GM12878 (cell line): ENCODE measurements at regions of chr14 and their contacts with region 1.

Region 1: GRCh38 chr14:65958664-65959562 is 527.3 kb upstream of the CCDC196 start:
- DNase-seq: no peak
- ATAC-seq: peak; percentile 82
- H3K4me3 ChIP-seq: no peak overlapping the region
- H3K27ac ChIP-seq: no peak overlapping the region
- H3K4me1 ChIP-seq: no peaks in the 10 kb centered on the region
- H3K27me3 ChIP-seq: peaks cover 2 to 4% of the 10 kb centered on the region in 2 experiments; a peak in 2 of 4 replicates
- CTCF ChIP-seq: peak; percentile 22 to 55 (median 42); a peak in 4 of 6 replicates
- EP300 ChIP-seq: no peak
- POLR2A ChIP-seq: no peak
- RAD21 ChIP-seq: peak; percentile 57

Region 2: GRCh38 chr14:65940056-65940733 is 18.7 kb before region 1 on chr14:
- CTCF ChIA-PET with region 1: interaction called, 15 read pairs
- POLR2A ChIA-PET with region 1: no interaction called
- RAD21 ChIA-PET with region 1: no interaction called
- SMC1A ChIA-PET with region 1: interaction called, 5 read pairs
- in situ Hi-C with region 1: no loop called
- intact Hi-C with region 1: no loop called
- DNase-seq: no peak
- ATAC-seq: peak; percentile 82
- H3K4me3 ChIP-seq: no peak overlapping the region
- H3K27ac ChIP-seq: no peak overlapping the region
- H3K4me1 ChIP-seq: no peaks in the 10 kb centered on the region
- H3K27me3 ChIP-seq: no peaks in the 10 kb centered on the region
- CTCF ChIP-seq: peak; percentile 44 to 51 (median 45); a peak in 5 of 6 replicates
- EP300 ChIP-seq: no peak
- POLR2A ChIP-seq: no peak
- RAD21 ChIP-seq: peak; percentile 26; the same call in 1 of the 2 replicates

Region 3: DNA sequence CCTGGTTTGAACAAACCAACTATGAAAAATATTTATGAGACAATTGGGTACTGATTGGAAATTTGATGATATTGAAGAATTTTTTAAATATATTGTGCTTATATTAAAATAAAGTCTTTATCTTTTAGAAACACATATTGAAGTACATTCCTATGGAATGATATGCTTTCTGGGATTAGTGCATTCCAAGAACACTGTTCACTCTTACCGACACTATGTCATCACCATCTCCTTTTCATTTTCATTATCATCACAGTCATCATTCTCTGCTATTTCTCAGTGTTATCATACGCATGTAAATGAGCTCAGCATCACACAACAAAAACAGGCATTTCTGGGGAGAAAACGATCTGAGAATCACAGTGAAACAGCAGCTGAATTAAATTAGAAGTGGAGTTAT is 14.0 kb after region 1 on chr14:
- CTCF ChIA-PET with region 1: interaction called, 10 read pairs
- POLR2A ChIA-PET with region 1: no interaction called
- RAD21 ChIA-PET with region 1: no interaction called
- SMC1A ChIA-PET with region 1: interaction called, 3 read pairs
- in situ Hi-C with region 1: no loop called
- intact Hi-C with region 1: no loop called
- DNase-seq: no peak
- ATAC-seq: no peak
- H3K4me3 ChIP-seq: no peak overlapping the region
- H3K27ac ChIP-seq: no peak overlapping the region
- H3K4me1 ChIP-seq: no peaks in the 10 kb centered on the region
- H3K27me3 ChIP-seq: peaks cover 0 to 4% of the 10 kb centered on the region in 2 experiments; a peak in 2 of 4 replicates
- CTCF ChIP-seq: no peak
- EP300 ChIP-seq: no peak
- POLR2A ChIP-seq: no peak
- RAD21 ChIP-seq: no peak

Region 4: GRCh38 chr14:66056926-66057552 is 98.1 kb after region 1 on chr14:
- CTCF ChIA-PET with region 1: interaction called, 11 read pairs
- POLR2A ChIA-PET with region 1: no interaction called
- RAD21 ChIA-PET with region 1: no interaction called
- SMC1A ChIA-PET with region 1: interaction called, 3 read pairs
- in situ Hi-C with region 1: no loop called
- intact Hi-C with region 1: no loop called
- DNase-seq: no peak
- ATAC-seq: peak; percentile 73
- H3K4me3 ChIP-seq: no peak overlapping the region
- H3K27ac ChIP-seq: no peak overlapping the region
- H3K4me1 ChIP-seq: no peaks in the 10 kb centered on the region
- H3K27me3 ChIP-seq: no peaks in the 10 kb centered on the region
- CTCF ChIP-seq: no peak
- EP300 ChIP-seq: no peak
- POLR2A ChIP-seq: no peak
- RAD21 ChIP-seq: no peak